ENCODE measurements at regions of chr12 and their contacts with region 1.

Region 1: GRCh38 chr12:46686267-46686942 is 139.4 kb downstream of the SLC38A4 start:
- DNase-seq: no peak
- H3K4me3 ChIP-seq: no peak overlapping the region
- H3K27ac ChIP-seq: no peak overlapping the region
- H3K4me1 ChIP-seq: no peaks in the 10 kb centered on the region
- H3K27me3 ChIP-seq: no peaks in the 10 kb centered on the region
- CTCF ChIP-seq: no peak
- EP300 ChIP-seq: no peak
- POLR2A ChIP-seq: no peak

Region 2: GRCh38 chr12:46933947-46934346 is 247.5 kb after region 1 on chr12:
- intact Hi-C with region 1: loop called in 1 of 4 experiments (anchors 10 kb)
- DNase-seq: no peak
- H3K4me3 ChIP-seq: no peak overlapping the region
- H3K27ac ChIP-seq: no peak overlapping the region
- H3K4me1 ChIP-seq: no peaks in the 10 kb centered on the region
- H3K27me3 ChIP-seq: no peaks in the 10 kb centered on the region
- CTCF ChIP-seq: peak in 1 of 3 donors; percentile 21
- EP300 ChIP-seq: no peak
- POLR2A ChIP-seq: no peak